ENCODE measurements at regions of chr12 and their contacts with region 1.

Region 1: DNA sequence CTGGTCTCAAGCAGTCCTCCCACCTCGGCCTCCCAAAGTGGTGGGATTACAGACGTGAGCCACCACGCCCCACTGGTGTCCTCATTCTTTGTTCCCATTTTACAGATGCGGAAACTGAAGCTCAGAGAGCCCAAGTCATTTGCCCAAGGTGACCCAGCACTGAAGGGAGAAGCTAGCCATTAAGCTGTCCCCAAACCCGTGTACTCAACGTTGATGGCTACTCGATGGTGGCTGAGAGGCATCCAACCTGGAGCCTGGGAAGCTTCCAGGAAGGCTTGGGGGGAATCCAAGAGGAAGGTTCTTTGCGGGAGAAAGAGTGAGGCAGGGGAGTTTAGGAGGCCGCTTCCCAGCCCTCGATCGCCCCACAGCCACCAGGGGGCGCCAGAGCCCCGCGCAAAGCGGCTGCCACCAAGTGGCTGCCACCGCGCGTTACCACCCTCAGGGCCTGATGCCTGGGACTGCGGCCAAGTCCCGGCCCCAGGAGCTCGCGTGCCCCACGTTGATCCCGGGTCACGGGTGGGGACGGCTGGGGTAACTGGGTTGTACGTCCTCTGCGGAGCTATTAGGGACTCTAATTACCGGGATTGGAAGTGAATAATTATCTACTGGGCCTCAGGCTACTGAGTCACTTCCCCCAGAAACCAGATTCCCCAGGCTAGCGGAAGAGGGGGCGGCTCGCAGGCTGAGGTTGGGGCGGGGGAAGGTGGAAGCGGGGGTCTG is 8.8 kb upstream of the SH2B3 start:
- DNase-seq: peak; percentile 87
- CTCF ChIP-seq: peak; percentile 99

Region 2: DNA sequence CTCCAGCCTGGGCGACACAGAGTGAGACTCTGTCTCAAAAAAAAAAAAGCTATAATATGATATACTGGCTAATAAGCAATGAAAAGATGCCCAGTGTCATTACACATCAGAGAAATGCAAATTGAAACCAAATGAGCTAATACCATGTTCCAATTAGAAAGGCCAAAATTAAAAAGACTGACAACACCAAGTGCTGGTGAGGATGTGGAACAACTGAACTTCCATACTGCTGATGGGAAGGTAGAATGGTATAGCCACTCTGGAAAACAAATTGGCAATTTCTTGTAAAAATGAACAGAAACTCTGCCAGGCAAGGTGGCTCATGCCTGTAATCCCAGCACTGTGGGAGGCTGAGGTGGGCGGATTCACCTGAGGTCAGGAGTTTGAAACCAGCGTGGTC is 19.4 kb before region 1 on chr12:
- CTCF ChIA-PET with region 1: interaction called, 17 read pairs
- POLR2A ChIA-PET with region 1: no interaction called
- DNase-seq: no peak
- CTCF ChIP-seq: no peak

Region 3: DNA sequence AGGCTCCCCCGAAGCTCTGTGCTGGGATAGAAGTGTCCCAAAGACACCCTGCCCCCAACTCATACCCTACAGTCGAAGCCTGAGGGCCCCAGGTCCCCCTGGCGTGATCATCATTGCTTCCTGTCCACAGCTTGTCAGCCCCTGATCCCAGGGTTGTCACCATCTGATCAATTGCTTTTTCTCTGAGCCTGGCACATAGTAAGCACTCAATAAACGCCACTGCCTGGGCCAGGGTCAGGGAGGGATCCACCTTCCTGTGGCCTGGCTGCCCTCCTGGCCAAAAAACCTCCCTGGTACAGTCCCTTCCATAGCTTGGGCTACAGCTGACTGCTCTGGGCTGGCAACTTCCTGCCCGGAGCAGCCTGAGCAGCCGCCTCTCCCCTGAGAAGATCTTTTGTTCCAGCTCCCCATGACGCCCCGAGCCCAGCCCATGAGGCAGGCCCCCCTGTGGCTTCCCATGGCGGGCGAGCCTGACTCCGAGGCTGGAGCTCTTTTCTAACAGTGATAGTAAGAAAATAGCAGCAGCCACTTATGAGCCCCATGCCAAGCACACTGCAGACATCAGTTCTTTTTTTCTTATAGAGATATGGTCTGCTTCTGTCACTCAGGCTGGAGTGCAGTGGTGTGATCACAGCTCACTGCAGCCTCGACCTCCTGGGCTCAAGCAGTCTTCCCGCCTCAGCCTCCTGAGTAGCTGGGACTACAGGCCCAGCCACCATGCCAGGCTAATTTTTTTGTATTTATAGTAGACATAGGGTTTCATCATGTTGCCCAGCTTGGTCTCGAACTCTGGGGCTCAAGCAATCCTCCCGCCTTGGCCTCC is 15.3 kb after region 1 on chr12:
- CTCF ChIA-PET with region 1: interaction called, 37 read pairs
- POLR2A ChIA-PET with region 1: no interaction called
- DNase-seq: no peak
- CTCF ChIP-seq: no peak

Region 4: DNA sequence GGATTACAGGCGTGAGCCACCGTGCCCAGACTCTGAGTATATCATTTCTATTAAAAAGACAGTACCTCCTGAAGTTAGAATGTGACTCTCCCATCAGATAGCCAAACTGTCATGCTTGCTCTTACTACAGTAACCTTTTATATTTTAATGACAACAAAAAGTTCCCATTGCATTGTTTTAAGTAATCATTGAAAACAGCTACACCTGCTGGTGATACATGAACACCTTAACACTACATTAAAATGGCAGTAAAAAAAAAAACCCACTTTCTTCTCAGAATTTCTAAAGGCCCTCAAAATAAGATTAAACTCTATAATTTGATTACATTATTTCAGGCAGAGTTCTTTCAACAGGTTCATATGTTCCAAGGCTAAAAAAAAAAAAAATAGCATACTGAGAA is 85.6 kb after region 1 on chr12:
- CTCF ChIA-PET with region 1: interaction called, 34 read pairs
- POLR2A ChIA-PET with region 1: no interaction called
- DNase-seq: no peak
- CTCF ChIP-seq: no peak

Region 5: GRCh38 chr12:111505601-111506036 is 108.7 kb after region 1 on chr12:
- CTCF ChIA-PET with region 1: interaction called, 12 read pairs
- POLR2A ChIA-PET with region 1: no interaction called
- DNase-seq: no peak
- CTCF ChIP-seq: no peak

Region 6: GRCh38 chr12:111673503-111673902 is 276.6 kb after region 1 on chr12:
- CTCF ChIA-PET with region 1: interaction called, 21 read pairs
- POLR2A ChIA-PET with region 1: no interaction called
- DNase-seq: no peak
- CTCF ChIP-seq: peak; percentile 37

Region 7: DNA sequence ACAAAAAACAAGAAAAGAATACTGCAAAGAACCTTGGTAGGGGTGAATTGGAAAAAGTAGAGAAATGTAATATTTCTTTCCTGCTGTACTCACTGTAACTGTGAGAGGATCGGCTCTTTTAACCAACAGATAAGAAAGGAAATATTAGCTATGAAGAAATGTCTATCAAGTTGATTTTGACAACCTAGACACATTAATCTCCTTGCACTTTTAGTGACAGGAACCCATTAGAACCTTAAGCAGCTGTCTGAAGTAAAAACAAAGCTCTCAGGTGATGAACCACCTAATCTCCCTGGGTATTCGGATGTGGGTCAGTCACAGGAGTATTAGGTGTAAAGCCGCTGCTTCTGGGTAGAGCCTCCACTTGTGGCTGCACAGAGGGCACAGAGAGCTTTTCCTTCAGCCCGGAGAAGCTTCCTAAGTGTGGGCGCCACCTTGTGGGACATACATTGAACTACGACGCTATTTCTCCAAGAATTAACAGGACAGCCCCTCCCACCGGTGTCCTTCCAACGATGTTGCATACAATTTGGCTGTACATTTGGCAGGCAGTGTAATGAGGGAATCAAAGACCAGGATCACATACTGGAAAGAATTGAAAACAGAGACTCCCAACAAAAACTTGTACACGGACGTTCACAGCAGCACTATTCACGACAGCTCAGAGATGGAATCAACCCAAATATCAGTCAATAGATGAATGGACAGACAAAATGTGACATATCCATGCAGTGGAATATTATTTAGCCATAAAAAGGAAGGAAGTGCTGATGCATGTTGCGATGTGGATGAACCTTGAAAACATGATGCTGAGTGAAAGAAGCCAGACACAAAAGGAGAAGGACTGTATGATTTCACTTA is 416.2 kb after region 1 on chr12:
- CTCF ChIA-PET with region 1: interaction called, 30 read pairs
- POLR2A ChIA-PET with region 1: no interaction called
- DNase-seq: peak; percentile 86
- CTCF ChIP-seq: peak; percentile 74